ENCODE measurements at regions of chr15 and their contacts with region 1.

Region 1: DNA sequence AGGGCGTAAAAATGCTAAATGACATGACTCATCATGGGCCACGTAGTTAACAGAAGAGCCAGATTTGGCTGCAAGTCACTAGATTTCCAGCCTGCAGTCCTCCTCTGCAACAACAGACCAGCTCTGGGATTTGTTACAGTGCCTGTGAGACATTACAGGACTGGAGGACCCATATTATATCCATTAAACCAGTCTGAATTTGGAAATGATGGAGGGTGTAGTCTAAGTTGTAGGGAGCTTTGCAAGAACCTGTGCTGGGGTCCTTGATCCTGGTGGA is 10.8 kb downstream of the ZNF774 start:
- H3K4me3 ChIP-seq: no peak overlapping the region
- H3K27ac ChIP-seq: no peak overlapping the region
- H3K4me1 ChIP-seq: no peaks in the 10 kb centered on the region
- CTCF ChIP-seq: no peak

Region 2: GRCh38 chr15:90352109-90352893 is 10.6 kb before region 1 on chr15 and contains the start of gene ZNF774:
- CTCF ChIA-PET with region 1: interaction called, 10 read pairs
- POLR2A ChIA-PET with region 1: interaction called, 7 read pairs
- H3K4me3 ChIP-seq: peak within 1 kb of the TSS; percentile 77
- H3K27ac ChIP-seq: peak within 1 kb of the TSS; percentile 45; the same call in 1 of the 2 replicates
- H3K4me1 ChIP-seq: peaks cover 2% of the 10 kb centered on the region; the same call in 1 of the 2 replicates
- CTCF ChIP-seq: no peak

Region 3: DNA sequence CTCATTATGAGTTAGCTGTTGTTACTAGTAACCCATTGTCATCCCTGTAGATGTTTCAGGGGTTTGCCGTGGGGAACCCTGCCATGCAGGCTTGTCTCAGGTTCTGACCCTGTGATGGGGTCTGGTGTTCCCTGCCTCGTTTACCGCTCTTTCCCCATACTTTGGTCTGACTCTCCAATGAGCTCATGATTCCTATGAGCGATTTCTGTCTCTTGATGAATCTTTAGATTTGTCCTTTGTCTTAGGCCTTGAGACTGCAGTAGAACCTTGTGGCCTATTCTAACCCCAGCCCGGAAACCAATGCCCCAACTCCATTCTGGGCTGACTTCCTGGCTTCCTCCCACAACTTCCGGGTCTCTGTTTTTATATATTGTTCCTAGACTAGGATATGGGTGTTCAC is 13.9 kb after region 1 on chr15:
- CTCF ChIA-PET with region 1: interaction called, 16 read pairs
- POLR2A ChIA-PET with region 1: no interaction called
- H3K4me3 ChIP-seq: no peak overlapping the region
- H3K27ac ChIP-seq: no peak overlapping the region
- H3K4me1 ChIP-seq: no peaks in the 10 kb centered on the region
- CTCF ChIP-seq: no peak